IMR-90 (cell line): ENCODE measurements at regions of chr15 and their contacts with region 1.

Region 1: GRCh38 chr15:80695104-80695910 is at the start of gene ABHD17C:
- DNase-seq: peak; percentile 53
- ATAC-seq: peak; percentile 84
- H3K4me3 ChIP-seq: peak within 1 kb of the TSS; percentile 100
- H3K27ac ChIP-seq: peak within 1 kb of the TSS; percentile 92
- H3K4me1 ChIP-seq: peaks cover 14% of the 10 kb centered on the region
- H3K27me3 ChIP-seq: no peaks in the 10 kb centered on the region
- CTCF ChIP-seq: no peak
- POLR2A ChIP-seq: no peak
- RAD21 ChIP-seq: no peak; the same call in 1 of the 2 replicates
- total RNA-seq, gene ABHD17C: 5.3 and 5.4 TPM in 2 replicates

Region 2: GRCh38 chr15:80599359-80599758 is 95.9 kb before region 1 on chr15:
- CTCF ChIA-PET with region 1: no interaction called
- POLR2A ChIA-PET with region 1: interaction called, 22 read pairs
- dilution Hi-C with region 1: no loop called
- in situ Hi-C with region 1: no loop called
- intact Hi-C with region 1: no loop called
- DNase-seq: peak; percentile 86
- ATAC-seq: peak; percentile 50; the same call in 1 of the 2 replicates
- H3K4me3 ChIP-seq: no peak overlapping the region
- H3K27ac ChIP-seq: no peak overlapping the region; the same call in 1 of the 2 replicates
- H3K4me1 ChIP-seq: peaks cover 16% of the 10 kb centered on the region
- H3K27me3 ChIP-seq: no peaks in the 10 kb centered on the region
- CTCF ChIP-seq: no peak
- POLR2A ChIP-seq: no peak
- RAD21 ChIP-seq: no peak

Region 3: DNA sequence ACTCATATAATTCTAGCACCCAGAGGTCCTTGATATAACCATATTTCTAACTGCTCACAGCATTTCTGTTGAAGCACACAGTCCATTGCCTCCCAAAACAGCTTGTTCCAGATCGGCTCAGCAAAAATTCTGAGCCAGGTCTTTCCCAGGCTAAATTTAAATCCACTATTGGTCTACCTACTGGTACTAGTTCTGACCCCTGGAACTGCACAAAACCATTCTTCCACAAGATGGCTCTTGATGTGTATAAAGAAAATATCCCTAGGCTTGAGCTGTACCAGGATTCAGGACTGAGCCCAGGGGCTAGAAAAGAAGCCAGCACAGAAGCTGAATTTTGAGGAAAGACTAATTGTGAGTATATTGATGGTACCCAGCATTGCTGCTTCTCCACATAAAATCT is 75.6 kb before region 1 on chr15:
- CTCF ChIA-PET with region 1: no interaction called
- POLR2A ChIA-PET with region 1: no interaction called
- dilution Hi-C with region 1: no loop called
- in situ Hi-C with region 1: no loop called
- intact Hi-C with region 1: loop called (anchors 2 kb)
- DNase-seq: peak; percentile 43
- ATAC-seq: peak; percentile 54
- H3K4me3 ChIP-seq: no peak overlapping the region
- H3K27ac ChIP-seq: peak overlapping the region; percentile 47; the same call in 1 of the 2 replicates
- H3K4me1 ChIP-seq: peaks cover 32% of the 10 kb centered on the region
- H3K27me3 ChIP-seq: no peaks in the 10 kb centered on the region
- CTCF ChIP-seq: peak; percentile 33; the same call in 1 of the 2 replicates
- POLR2A ChIP-seq: no peak
- RAD21 ChIP-seq: peak; percentile 38

Region 4: DNA sequence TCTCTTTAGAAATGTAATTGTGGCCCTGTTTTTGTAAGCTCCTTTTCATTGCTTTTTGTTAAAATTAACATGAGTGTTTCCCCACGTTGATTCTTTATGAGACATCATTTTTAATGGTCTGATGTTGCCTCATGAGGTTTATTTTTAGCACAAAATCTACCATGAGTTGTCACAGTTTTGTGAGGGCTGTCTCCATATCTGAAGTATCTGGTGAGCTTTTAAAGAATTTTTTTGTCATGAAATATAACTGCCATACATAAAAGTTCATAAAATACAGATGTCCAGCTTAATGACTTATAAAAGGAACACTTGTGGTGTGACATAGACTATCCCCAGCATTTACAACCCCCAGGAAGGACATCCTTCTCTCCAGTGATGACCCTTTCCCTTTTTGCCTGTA is 49.5 kb after region 1 on chr15:
- CTCF ChIA-PET with region 1: no interaction called
- POLR2A ChIA-PET with region 1: no interaction called
- dilution Hi-C with region 1: no loop called
- in situ Hi-C with region 1: no loop called
- intact Hi-C with region 1: no loop called
- DNase-seq: peak; percentile 60
- ATAC-seq: no peak
- H3K4me3 ChIP-seq: no peak overlapping the region
- H3K27ac ChIP-seq: no peak overlapping the region
- H3K4me1 ChIP-seq: peaks cover 10% of the 10 kb centered on the region
- H3K27me3 ChIP-seq: no peaks in the 10 kb centered on the region
- CTCF ChIP-seq: no peak
- POLR2A ChIP-seq: no peak
- RAD21 ChIP-seq: no peak